Caco-2 (cell line): ENCODE measurements at regions of chr1 and their contacts with region 1.

Region 1: DNA sequence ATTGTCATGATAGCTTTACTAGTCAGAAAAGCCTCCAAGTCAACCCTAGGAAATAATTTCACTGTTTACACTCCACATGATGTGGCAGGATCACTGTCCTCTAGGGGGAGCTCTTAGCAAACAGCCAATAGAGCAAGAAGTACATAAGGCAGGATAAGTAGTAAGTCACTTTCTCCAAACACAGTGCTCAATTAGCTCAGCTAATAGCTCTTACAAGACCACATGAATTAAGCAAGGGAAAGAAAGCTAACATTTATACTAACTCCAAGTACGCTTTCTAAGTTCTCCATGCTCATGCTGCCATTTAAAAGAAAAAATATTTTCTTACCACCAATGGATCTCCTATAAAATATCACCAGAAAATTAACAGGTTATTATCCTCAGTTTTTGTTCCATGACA is 66.9 kb upstream of the LRIF1 start:
- DNase-seq: peak in 1 of 2 experiments; percentile 59
- H3K4me3 ChIP-seq: no peak overlapping the region
- H3K4me3 Mint-ChIP-seq: no peak overlapping the region
- H3K27ac Mint-ChIP-seq: no peak overlapping the region
- H3K4me1 ChIP-seq: no peaks in the 10 kb centered on the region
- H3K4me1 Mint-ChIP-seq: peaks cover 5% of the 10 kb centered on the region
- H3K27me3 ChIP-seq: no peaks in the 10 kb centered on the region
- H3K27me3 Mint-ChIP-seq: peaks cover 8% of the 10 kb centered on the region
- CTCF ChIP-seq: peak; percentile 60 to 62

Region 2: DNA sequence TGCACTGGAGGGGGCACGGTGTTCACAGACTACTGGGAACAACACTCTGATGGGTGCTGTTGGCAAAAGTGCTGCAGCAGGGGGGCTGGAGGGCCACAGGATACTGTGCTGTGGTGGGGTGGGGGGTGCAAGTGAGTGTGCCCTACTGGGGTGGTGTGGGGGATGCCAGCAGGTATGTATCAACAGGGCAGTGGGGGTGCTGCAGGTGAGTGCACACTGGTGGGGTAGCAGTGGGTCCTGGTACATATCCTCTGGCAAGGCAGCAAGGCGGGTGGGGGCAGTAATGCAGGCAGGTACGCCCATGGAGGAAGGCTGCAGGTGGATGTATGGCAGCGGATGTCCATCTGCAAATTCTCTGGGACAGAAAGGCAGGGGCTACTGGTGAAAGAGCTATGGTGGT is 206.4 kb before region 1 on chr1:
- CTCF ChIA-PET with region 1: interaction called, 10 read pairs
- POLR2A ChIA-PET with region 1: no interaction called
- intact Hi-C with region 1: no loop called
- DNase-seq: no peak
- H3K4me3 ChIP-seq: no peak overlapping the region
- H3K4me3 Mint-ChIP-seq: no peak overlapping the region
- H3K27ac Mint-ChIP-seq: no peak overlapping the region
- H3K4me1 ChIP-seq: no peaks in the 10 kb centered on the region
- H3K4me1 Mint-ChIP-seq: no peaks in the 10 kb centered on the region
- H3K27me3 ChIP-seq: no peaks in the 10 kb centered on the region
- H3K27me3 Mint-ChIP-seq: peaks cover 13% of the 10 kb centered on the region
- CTCF ChIP-seq: no peak